Activated CD4-positive, alpha-beta T cell treated with anti-CD3 and anti-CD28 coated beads for 36 hours (primary cell): ENCODE measurements at regions of chr19 and their contacts with region 1.

Region 1: GRCh38 chr19:42268704-42269477 is at the start of gene CIC:
- DNase-seq: peak; percentile 100
- ATAC-seq: peak; percentile 87
- H3K4me3 Mint-ChIP-seq: no peak within 1 kb of the TSS
- H3K27ac Mint-ChIP-seq: peak within 1 kb of the TSS; percentile 97
- H3K4me1 Mint-ChIP-seq: peaks cover 24% of the 10 kb centered on the region
- H3K27me3 Mint-ChIP-seq: no peaks in the 10 kb centered on the region
- total RNA-seq, gene CIC: 62.8 to 66.3 TPM

Region 2: DNA sequence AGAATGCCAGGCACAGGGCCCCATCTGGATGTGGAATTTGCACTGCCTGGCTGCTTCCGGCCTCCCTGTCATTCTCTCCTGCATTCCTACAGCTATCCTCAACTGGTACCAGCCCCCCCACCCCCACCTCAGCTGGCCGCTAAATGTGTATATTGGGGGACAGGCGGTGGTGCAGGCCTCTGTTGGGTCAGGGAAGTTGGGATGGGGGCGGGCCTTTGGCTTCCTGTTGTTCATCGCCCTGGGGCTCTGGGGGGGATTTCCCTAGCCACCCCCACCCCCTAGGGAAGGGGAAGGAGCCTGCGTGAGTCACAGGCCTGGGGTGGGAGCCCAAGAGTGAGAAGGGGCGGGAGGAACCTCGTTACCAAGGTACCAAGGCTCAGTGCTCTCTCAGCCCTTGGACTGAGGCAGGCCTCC is 147.2 kb before region 1 on chr19:
- CTCF ChIA-PET with region 1: no interaction called
- POLR2A ChIA-PET with region 1: no interaction called
- intact Hi-C with region 1: loop called in 1 of 2 experiments (anchors 1 kb)
- DNase-seq: peak; percentile 93
- ATAC-seq: peak; percentile 81
- H3K4me3 Mint-ChIP-seq: peak overlapping the region; percentile 80
- H3K27ac Mint-ChIP-seq: peak overlapping the region; percentile 94
- H3K4me1 Mint-ChIP-seq: peaks cover 57% of the 10 kb centered on the region
- H3K27me3 Mint-ChIP-seq: no peaks in the 10 kb centered on the region

Region 3: DNA sequence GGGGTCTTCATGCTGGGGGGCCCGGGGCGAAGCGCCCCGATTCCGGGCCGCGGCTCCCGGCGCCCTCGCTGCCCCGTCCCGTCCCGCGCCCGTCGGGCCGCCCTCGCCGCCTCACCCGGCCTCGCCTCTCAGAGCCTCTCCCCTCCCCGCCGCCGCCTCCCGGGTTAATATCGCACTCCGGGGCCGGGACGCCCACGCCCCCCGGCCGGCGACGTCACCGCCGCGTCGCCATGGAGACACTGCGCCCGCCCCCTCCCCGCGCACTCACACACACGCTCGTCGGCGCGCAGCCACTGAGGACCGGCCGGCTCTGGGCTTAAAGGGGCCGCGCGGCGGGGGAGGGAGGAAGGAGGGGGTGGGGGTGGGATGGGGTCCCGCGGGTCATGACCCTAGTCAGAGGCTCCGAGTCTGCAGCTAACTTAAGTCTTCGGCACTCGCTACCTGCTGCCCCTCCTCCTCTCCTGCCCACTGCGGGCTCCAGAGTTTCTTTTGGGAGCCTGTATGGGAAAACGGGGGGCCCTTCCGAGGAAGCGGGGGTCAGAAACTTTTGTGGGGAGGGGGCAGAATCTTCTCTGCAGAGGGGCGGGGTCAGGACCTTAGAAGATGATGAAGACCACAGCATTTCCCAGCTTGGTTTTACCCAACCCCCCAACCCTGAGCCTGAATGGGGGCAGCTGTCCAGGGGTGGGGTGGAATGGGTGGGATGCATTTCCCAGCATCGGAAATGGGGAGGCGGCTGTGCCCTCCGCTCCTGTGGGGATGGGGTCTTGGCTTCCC is 13.7 kb before region 1 on chr19 and contains the start of gene ERF:
- CTCF ChIA-PET with region 1: interaction called, 5 read pairs
- POLR2A ChIA-PET with region 1: no interaction called
- intact Hi-C with region 1: loop called (anchors 1 kb)
- DNase-seq: peak; percentile 97
- ATAC-seq: peak; percentile 73
- H3K4me3 Mint-ChIP-seq: peak within 1 kb of the TSS; percentile 70
- H3K27ac Mint-ChIP-seq: peak within 1 kb of the TSS; percentile 63
- H3K4me1 Mint-ChIP-seq: peaks cover 25% of the 10 kb centered on the region
- H3K27me3 Mint-ChIP-seq: peaks cover 3% of the 10 kb centered on the region
- total RNA-seq, gene ERF: 65.5 to 66.4 TPM

Region 4: GRCh38 chr19:42301656-42302203 is 32.8 kb after region 1 on chr19 and contains the start of gene PRR19:
- CTCF ChIA-PET with region 1: no interaction called
- POLR2A ChIA-PET with region 1: no interaction called
- intact Hi-C with region 1: loop called (anchors 1 kb)
- DNase-seq: peak; percentile 50
- ATAC-seq: peak; percentile 25
- H3K4me3 Mint-ChIP-seq: peak within 1 kb of the TSS; percentile 83
- H3K27ac Mint-ChIP-seq: peak within 1 kb of the TSS; percentile 85
- H3K4me1 Mint-ChIP-seq: peaks cover 19% of the 10 kb centered on the region
- H3K27me3 Mint-ChIP-seq: no peaks in the 10 kb centered on the region
- total RNA-seq, gene PRR19: 0.63 to 1.0 TPM

Region 5: GRCh38 chr19:42313096-42313839 is 44.4 kb after region 1 on chr19 and contains the start of gene TMEM145:
- CTCF ChIA-PET with region 1: no interaction called
- POLR2A ChIA-PET with region 1: no interaction called
- intact Hi-C with region 1: no loop called
- DNase-seq: peak; percentile 75
- ATAC-seq: peak; percentile 75
- H3K4me3 Mint-ChIP-seq: peak within 1 kb of the TSS; percentile 47
- H3K27ac Mint-ChIP-seq: no peak within 1 kb of the TSS
- H3K4me1 Mint-ChIP-seq: peaks cover 13% of the 10 kb centered on the region
- H3K27me3 Mint-ChIP-seq: peaks cover 30% of the 10 kb centered on the region
- total RNA-seq, gene TMEM145: 0.53 to 0.69 TPM

Region 6: GRCh38 chr19:42396381-42397262 is 127.7 kb after region 1 on chr19:
- CTCF ChIA-PET with region 1: no interaction called
- POLR2A ChIA-PET with region 1: no interaction called
- intact Hi-C with region 1: loop called in 1 of 2 experiments (anchors 1 kb)
- DNase-seq: peak; percentile 97
- ATAC-seq: peak; percentile 99
- H3K4me3 Mint-ChIP-seq: peak overlapping the region; percentile 88
- H3K27ac Mint-ChIP-seq: peak overlapping the region; percentile 90
- H3K4me1 Mint-ChIP-seq: peaks cover 18% of the 10 kb centered on the region
- H3K27me3 Mint-ChIP-seq: peaks cover 2% of the 10 kb centered on the region